ENCODE measurements at regions of chr3 and their contacts with region 1.

Region 1: GRCh38 chr3:63921741-63922482 is 9.7 kb upstream of the SCAANT1 start:
- DNase-seq: no peak
- H3K4me3 ChIP-seq: no peak overlapping the region
- H3K27ac ChIP-seq: no peak overlapping the region
- H3K4me1 ChIP-seq: peaks cover 0 to 40% (median 21%) of the 10 kb centered on the region in 4 donors
- H3K27me3 ChIP-seq: no peaks in the 10 kb centered on the region
- CTCF ChIP-seq: no peak
- EP300 ChIP-seq: no peak
- POLR2A ChIP-seq: no peak

Region 2: DNA sequence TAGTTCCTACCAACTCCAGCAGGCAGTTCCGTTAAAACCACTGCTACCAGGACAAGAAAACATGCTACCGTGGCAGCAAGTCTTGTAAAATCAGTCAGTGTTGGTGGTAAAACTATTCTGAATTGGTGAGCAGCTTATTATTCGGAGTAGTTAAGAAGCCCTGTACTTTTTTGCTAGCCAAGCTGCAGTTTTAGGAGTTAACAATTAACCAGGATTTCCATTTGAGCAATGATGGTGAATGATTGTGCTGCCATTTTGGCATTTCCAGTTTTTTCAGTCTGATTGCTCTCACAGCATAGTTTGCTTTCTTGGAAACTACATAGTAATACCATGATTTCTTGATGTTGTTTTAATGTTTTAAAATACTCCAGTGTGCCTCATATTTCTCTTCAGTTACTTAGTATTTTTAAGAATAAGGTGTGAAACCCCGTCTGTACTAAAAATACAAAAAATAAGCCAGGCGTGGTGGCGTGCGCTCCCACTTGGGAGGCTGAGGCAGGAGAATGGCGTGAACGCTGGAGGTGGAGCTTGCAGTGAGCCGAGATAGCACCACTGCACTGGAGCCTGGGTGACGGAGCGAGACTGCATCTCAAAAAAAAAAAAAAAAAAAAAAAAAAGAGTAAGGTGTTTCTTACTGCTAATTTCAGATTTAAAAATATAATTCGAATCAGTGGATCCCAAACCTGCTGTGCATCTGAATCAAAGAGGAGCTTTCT is 34.1 kb after region 1 on chr3:
- intact Hi-C with region 1: loop called (anchors 5 kb)
- DNase-seq: no peak
- H3K4me3 ChIP-seq: no peak overlapping the region
- H3K27ac ChIP-seq: peak overlapping the region in 3 of 4 donors; percentile 7 to 70 (median 43)
- H3K4me1 ChIP-seq: peaks cover 20 to 91% (median 72%) of the 10 kb centered on the region in 4 donors
- H3K27me3 ChIP-seq: no peaks in the 10 kb centered on the region
- CTCF ChIP-seq: no peak
- EP300 ChIP-seq: no peak
- POLR2A ChIP-seq: no peak

Measured in esophagus muscularis mucosa (tissue), 4 donors.